A673 (cell line): ENCODE measurements at regions of chr13 and their contacts with region 1.

Region 1: GRCh38 chr13:44969551-44970484 is 19.5 kb downstream of the NUFIP1 start:
- DNase-seq: peak; percentile 71
- H3K4me3 ChIP-seq: no peak overlapping the region
- H3K27ac ChIP-seq: no peak overlapping the region
- H3K4me1 ChIP-seq: peaks cover 16% of the 10 kb centered on the region
- H3K27me3 ChIP-seq: no peaks in the 10 kb centered on the region
- CTCF ChIP-seq: peak; percentile 89

Region 2: GRCh38 chr13:44719857-44720671 is 249.8 kb before region 1 on chr13:
- CTCF ChIA-PET with region 1: interaction called, 11 read pairs
- POLR2A ChIA-PET with region 1: no interaction called
- intact Hi-C with region 1: no loop called
- DNase-seq: no peak
- H3K4me3 ChIP-seq: no peak overlapping the region
- H3K27ac ChIP-seq: no peak overlapping the region
- H3K4me1 ChIP-seq: no peaks in the 10 kb centered on the region
- H3K27me3 ChIP-seq: no peaks in the 10 kb centered on the region
- CTCF ChIP-seq: no peak

Region 3: DNA sequence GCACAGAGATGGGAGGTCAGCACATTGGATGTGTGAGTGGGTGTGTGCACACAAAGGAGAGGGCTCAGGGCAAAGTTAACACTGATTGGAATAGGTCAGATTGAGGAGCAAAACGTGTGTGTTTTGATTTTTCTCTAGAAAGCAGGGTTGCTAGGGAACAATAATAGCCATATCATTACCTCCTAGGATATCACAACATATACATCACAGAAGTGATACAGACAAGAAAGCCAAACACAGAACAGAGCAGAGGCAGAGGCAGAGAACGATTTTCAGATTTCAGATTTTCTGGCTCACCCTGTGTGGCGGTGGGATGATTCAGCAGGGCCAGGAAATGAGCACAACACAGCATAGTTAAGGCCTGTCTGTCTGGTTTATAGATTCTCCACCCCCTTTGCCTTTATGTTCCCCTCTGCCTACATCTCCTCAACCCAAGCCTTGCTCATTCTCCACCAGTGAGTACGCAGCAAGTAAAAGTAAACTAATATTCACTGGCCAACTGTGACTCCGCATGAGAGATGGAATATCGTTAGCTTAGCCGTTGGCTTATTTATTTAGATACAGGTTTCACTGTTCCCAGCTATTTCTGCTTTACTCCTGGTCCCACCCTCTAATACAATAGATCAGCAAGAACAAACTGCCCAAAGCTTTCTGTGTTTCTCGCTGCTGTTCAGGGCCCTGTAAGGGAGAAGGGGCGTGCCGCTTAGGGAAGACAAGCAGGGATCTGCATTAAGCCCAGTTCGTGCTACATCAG is 211.0 kb before region 1 on chr13:
- CTCF ChIA-PET with region 1: no interaction called
- POLR2A ChIA-PET with region 1: no interaction called
- intact Hi-C with region 1: no loop called
- DNase-seq: peak; percentile 23
- H3K4me3 ChIP-seq: no peak overlapping the region
- H3K27ac ChIP-seq: no peak overlapping the region
- H3K4me1 ChIP-seq: peaks cover 7% of the 10 kb centered on the region
- H3K27me3 ChIP-seq: no peaks in the 10 kb centered on the region
- CTCF ChIP-seq: no peak

Region 4: GRCh38 chr13:45047394-45048310 is 77.8 kb after region 1 on chr13:
- CTCF ChIA-PET with region 1: no interaction called
- POLR2A ChIA-PET with region 1: no interaction called
- intact Hi-C with region 1: no loop called
- DNase-seq: peak; percentile 88
- H3K4me3 ChIP-seq: peak overlapping the region; percentile 52
- H3K27ac ChIP-seq: no peak overlapping the region
- H3K4me1 ChIP-seq: peaks cover 4% of the 10 kb centered on the region
- H3K27me3 ChIP-seq: no peaks in the 10 kb centered on the region
- CTCF ChIP-seq: peak; percentile 86

Region 5: GRCh38 chr13:45310341-45311125 is 340.7 kb after region 1 on chr13:
- CTCF ChIA-PET with region 1: interaction called, 5 read pairs
- POLR2A ChIA-PET with region 1: no interaction called
- intact Hi-C with region 1: loop called (anchors 5 kb)
- DNase-seq: no peak
- H3K4me3 ChIP-seq: peak overlapping the region; percentile 39
- H3K27ac ChIP-seq: no peak overlapping the region
- H3K4me1 ChIP-seq: no peaks in the 10 kb centered on the region
- H3K27me3 ChIP-seq: no peaks in the 10 kb centered on the region
- CTCF ChIP-seq: no peak

Region 6: DNA sequence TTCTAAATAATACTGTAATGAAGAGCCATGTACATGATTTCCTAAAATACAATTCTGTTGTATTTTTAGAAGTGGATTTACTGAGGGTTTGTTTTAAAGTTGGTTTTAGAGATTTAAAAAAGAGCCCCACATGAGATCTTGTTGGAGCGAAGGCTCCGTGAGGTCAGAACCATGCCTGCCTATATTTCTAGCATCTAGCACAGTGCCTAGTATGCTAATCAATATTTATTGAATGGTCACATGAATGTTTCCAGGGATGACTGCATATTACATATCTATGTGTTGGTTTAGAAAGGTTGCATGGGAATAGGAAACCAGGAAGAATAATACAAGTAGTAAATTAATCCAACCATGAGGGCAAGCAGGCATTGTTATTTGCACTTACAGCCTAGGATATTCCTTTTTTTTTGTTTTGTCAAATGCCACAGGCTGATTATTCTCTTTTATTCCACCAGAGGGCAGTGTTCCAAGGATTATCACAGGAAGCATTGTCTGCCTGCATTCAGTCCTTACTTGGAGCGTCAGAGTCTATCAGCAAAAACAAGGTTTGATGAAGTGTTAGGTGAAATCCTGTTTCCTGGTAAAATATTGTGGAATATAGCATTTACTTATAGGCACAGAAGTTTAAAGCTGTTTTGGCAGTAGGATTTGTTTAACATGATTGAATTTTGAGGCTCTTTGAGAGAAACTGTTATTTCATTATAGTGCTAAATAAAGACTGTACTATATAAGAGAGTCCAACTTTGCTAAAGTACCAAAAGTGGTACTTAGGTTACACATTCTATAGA is 541.7 kb after region 1 on chr13:
- CTCF ChIA-PET with region 1: no interaction called
- POLR2A ChIA-PET with region 1: no interaction called
- intact Hi-C with region 1: no loop called
- DNase-seq: peak; percentile 87
- H3K4me3 ChIP-seq: no peak overlapping the region
- H3K27ac ChIP-seq: no peak overlapping the region
- H3K4me1 ChIP-seq: peaks cover 21% of the 10 kb centered on the region
- H3K27me3 ChIP-seq: no peaks in the 10 kb centered on the region
- CTCF ChIP-seq: peak; percentile 84